Activated CD4-positive, alpha-beta memory T cell treated with anti-CD3 and anti-CD28 coated beads for 36 hours (primary cell): ENCODE measurements at regions of chr1 and their contacts with region 1.

Region 1: DNA sequence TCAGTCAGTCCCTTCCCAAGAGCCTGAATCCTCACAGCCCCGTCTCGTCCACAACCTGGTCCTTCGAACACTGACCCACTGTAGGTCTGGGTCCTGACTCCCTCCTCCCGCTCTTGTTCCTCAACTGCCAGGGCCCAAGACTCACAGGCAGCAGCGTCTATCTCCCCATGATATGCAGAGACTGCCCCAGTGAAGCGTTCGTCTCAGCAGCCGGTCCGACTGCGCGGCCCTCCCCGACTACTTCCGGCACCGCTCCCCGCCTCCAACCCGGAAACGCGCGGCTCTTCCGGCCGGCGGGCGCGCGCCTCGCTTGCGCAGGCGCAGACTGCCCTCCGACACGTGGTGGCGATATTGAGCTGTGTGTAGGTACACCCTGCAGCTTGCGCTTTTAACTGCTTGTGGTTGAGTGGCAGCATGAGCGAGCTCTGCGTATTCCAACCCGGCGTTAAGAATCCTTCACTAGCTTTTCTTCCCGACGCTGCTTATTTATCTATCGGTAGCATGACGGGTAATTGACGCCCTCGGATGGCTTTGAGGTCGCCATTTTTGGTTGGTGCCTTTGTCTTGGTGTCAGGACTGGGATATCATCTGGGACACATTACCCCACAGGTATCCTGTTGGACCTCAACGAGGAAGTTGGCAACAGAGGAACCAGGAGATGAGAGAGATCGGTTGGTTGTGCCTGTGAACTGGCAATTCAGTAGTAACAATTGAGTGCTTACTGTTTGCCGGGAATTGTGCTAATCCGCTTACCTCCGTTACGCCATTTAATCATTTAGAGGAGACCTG is at the start of gene TAF12:
- DNase-seq: peak; percentile 95
- H3K4me3 Mint-ChIP-seq: peak within 1 kb of the TSS; percentile 93
- H3K27ac Mint-ChIP-seq: peak within 1 kb of the TSS; percentile 96
- H3K4me1 Mint-ChIP-seq: peaks cover 45% of the 10 kb centered on the region
- H3K27me3 Mint-ChIP-seq: no peaks in the 10 kb centered on the region
- total RNA-seq, gene TAF12: 26.8 to 27.5 TPM

Region 2: DNA sequence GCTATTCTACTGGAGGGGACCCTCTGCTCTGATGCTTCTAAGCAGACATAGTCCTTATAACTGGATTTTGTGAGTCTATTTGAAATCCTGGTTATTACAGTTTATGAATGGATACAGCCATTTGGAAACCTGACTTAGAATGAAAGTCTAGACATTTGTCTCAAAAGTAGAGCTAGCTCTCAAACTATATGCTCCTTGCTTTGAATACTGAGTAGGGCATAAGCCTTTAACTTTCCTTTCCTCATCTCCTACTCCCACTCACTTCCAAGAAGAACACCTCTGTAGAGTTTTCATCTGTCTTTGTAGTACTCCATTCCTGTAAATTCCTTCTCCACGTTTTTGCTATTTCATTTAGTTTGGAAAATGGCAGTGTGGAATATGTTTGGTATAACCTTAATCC is 1956.2 kb before region 1 on chr1:
- CTCF ChIA-PET with region 1: no interaction called
- POLR2A ChIA-PET with region 1: no interaction called
- intact Hi-C with region 1: no loop called
- DNase-seq: no peak
- H3K4me3 Mint-ChIP-seq: no peak overlapping the region
- H3K27ac Mint-ChIP-seq: no peak overlapping the region
- H3K4me1 Mint-ChIP-seq: peaks cover 20% of the 10 kb centered on the region
- H3K27me3 Mint-ChIP-seq: no peaks in the 10 kb centered on the region

Region 3: DNA sequence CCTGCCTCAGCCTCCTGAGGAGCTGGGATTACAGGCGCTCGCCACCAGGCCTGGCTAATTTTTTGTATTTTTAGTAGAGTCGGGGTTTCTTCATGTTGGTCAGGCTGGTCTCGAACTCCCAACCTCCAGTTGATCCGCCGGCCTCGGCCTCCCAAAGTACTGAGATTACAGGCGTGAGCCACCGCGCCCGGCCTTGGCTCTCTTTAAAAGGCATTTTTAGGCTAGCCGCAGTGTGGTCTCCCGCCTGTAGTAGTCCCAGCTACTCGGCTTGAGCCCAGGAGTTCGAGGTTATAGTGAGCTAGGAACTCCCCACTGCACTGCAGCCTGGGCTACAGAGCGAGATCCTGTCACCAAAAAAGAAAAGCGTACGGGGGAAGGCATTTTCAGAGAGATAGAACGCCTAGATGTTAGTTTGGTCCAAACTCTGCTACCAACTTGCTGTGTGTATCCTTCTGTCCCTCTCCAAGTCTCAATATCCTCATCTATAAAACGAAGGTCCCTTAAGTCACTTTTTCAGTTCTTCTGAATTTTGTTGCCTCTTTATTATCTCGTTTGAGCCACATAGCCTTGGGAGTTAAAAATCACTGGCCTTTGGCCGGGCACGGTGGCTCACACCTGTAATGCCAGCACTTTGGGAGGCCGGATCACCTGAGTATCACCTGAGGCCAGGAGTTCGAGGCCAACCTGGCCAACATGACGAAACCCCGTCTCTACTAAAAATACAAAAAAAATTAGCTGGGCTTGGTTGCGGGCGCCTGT is 313.5 kb before region 1 on chr1:
- CTCF ChIA-PET with region 1: no interaction called
- POLR2A ChIA-PET with region 1: interaction called, 9 read pairs
- intact Hi-C with region 1: loop called (anchors 2 kb)
- DNase-seq: peak; percentile 59
- H3K4me3 Mint-ChIP-seq: peak overlapping the region; percentile 93
- H3K27ac Mint-ChIP-seq: peak overlapping the region; percentile 96
- H3K4me1 Mint-ChIP-seq: peaks cover 28% of the 10 kb centered on the region
- H3K27me3 Mint-ChIP-seq: peaks cover 1% of the 10 kb centered on the region

Region 4: GRCh38 chr1:28505406-28506187 is 137.4 kb before region 1 on chr1 and contains the start of gene RCC1:
- CTCF ChIA-PET with region 1: interaction called, 4 read pairs
- POLR2A ChIA-PET with region 1: interaction called, 18 read pairs
- intact Hi-C with region 1: no loop called
- DNase-seq: peak; percentile 98
- H3K4me3 Mint-ChIP-seq: peak within 1 kb of the TSS; percentile 97
- H3K27ac Mint-ChIP-seq: peak within 1 kb of the TSS; percentile 97
- H3K4me1 Mint-ChIP-seq: peaks cover 38% of the 10 kb centered on the region
- H3K27me3 Mint-ChIP-seq: peaks cover 6% of the 10 kb centered on the region
- total RNA-seq, gene RCC1: 83.5 to 86.1 TPM

Region 5: DNA sequence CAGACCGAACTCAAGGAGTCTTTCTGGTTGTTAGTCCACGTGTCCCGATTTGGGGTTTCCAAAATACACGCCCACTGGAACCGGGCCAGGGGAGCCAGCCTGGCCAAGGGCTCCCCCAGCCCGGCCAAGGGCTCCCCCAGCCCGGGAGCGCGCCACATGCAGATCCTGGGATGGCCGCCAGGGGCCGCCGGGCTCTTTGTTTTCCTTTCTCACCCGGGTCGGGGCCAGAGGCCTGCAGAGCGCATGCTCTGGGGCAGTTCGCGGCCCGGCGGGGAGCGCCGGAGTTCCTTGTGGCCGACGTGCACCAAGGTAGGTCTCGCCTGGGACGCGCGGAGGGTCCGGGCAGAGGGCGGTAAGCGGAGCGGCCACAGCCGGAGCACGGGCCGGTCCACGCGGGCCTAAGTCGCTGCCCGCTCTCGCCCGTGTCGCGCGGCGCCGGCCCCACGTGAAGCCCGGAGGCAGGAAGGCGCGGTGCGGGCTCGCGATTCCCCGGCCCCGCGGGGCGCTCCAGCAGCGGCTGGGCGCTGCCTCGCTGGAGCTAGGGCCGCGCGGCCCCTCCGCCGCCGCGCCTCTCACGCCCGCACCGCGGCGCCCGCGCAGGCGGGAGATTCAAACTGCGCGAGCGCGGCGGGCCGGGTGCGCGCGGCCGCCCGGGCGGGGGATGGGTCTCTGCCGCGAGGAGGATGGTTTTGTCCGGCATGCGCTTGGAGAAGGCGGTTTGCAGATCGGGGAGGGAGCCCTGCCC is 124.9 kb before region 1 on chr1:
- CTCF ChIA-PET with region 1: no interaction called
- POLR2A ChIA-PET with region 1: interaction called, 7 read pairs
- intact Hi-C with region 1: loop called (anchors 2 kb)
- DNase-seq: peak; percentile 93
- H3K4me3 Mint-ChIP-seq: peak overlapping the region; percentile 88
- H3K27ac Mint-ChIP-seq: peak overlapping the region; percentile 93
- H3K4me1 Mint-ChIP-seq: peaks cover 41% of the 10 kb centered on the region
- H3K27me3 Mint-ChIP-seq: no peaks in the 10 kb centered on the region

Region 6: DNA sequence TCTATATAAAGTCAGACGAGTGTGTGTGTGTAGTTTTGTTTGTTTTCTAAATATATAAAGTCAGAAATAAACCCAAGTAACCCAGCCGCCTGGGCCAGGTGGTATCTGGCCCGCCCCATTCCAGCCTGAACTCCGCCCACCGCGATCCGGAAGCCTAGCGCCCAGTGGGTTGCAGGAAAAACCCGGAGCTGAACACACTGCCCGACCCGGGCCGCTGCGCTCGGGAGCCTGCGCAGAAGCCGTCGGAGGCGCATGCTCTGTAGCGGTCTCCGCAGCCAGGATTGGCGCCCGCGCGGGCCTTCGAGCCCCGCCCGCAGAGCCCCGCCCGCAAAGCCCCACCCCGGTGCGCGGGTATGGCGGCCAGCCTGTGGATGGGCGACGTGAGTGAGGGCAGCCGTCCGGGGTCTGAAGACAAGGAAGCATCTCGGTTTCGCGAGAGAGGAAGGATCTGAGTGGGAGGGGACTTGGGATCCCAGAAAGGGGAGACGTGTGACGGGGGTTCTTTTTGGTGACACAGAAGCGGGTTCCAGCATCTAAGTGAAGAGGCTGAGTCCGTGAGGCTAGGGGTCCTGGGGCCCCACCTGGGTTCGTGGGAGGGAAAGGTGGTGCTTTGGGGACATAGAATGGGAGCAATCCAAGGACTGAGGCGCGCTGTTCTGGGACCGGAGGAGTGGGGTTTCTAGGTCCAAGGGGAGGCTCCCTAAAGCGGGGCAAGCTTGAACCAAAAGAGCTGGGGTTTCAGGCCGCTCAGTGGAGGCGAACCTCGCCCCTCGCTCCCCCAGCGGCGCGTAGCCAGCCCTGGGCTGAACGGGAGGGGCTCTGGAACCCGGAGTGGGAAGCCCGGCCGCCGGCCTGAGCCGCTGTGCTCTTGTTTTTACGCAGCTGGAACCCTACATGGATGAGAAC is 90.0 kb before region 1 on chr1 and contains the start of gene TRNAU1AP:
- CTCF ChIA-PET with region 1: no interaction called
- POLR2A ChIA-PET with region 1: interaction called, 14 read pairs
- intact Hi-C with region 1: loop called (anchors 10 kb)
- DNase-seq: peak; percentile 99
- H3K4me3 Mint-ChIP-seq: peak within 1 kb of the TSS; percentile 98
- H3K27ac Mint-ChIP-seq: peak within 1 kb of the TSS; percentile 96
- H3K4me1 Mint-ChIP-seq: peaks cover 17% of the 10 kb centered on the region
- H3K27me3 Mint-ChIP-seq: no peaks in the 10 kb centered on the region
- total RNA-seq, gene TRNAU1AP: 57.3 to 59.6 TPM

Region 7: GRCh38 chr1:28668191-28668955 is 25.3 kb after region 1 on chr1 and contains the start of gene GMEB1:
- CTCF ChIA-PET with region 1: interaction called, 7 read pairs
- POLR2A ChIA-PET with region 1: interaction called, 120 read pairs
- intact Hi-C with region 1: loop called (anchors 1 kb)
- DNase-seq: peak; percentile 91
- H3K4me3 Mint-ChIP-seq: peak within 1 kb of the TSS; percentile 95
- H3K27ac Mint-ChIP-seq: peak within 1 kb of the TSS; percentile 99
- H3K4me1 Mint-ChIP-seq: peaks cover 12% of the 10 kb centered on the region
- H3K27me3 Mint-ChIP-seq: no peaks in the 10 kb centered on the region
- total RNA-seq, gene GMEB1: 21.4 to 22.6 TPM